A549 (cell line): ENCODE measurements at regions of chr5 and their contacts with region 1.

Region 1: DNA sequence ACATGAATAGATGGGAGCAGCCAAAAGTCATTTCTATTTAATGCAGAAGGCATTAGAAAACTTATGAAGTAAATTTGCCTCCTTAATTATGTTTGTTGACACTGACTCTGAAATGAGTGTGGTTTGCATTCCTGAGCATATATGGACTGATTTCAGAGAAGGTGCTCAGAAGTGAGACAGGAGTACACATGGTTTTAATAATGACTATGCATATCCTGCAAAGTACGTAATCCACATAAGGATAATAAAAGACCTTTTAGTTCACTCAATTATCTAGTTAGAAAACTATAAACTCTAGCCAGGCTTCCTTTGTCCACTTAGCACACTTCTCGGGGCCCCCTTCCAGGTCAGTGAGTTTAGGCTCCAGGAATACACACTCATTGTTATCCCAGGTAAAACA is 75.7 kb upstream of the SNX2 start:
- DNase-seq: no peak
- ATAC-seq: no peak
- H3K4me3 ChIP-seq: no peak overlapping the region
- H3K27ac ChIP-seq: no peak overlapping the region
- H3K4me1 ChIP-seq: no peaks in the 10 kb centered on the region
- CTCF ChIP-seq: no peak
- EP300 ChIP-seq: no peak
- POLR2A ChIP-seq: no peak
- RAD21 ChIP-seq: no peak

Region 2: GRCh38 chr5:122680631-122681350 is 18.4 kb before region 1 on chr5:
- CTCF ChIA-PET with region 1: interaction called, 13 read pairs
- POLR2A ChIA-PET with region 1: interaction called, 11 read pairs
- DNase-seq: no peak
- ATAC-seq: peak in 1 of 2 experiments; percentile 39; a peak in 1 of 6 replicates
- H3K4me3 ChIP-seq: no peak overlapping the region
- H3K27ac ChIP-seq: no peak overlapping the region
- H3K4me1 ChIP-seq: no peaks in the 10 kb centered on the region
- CTCF ChIP-seq: no peak
- EP300 ChIP-seq: no peak
- POLR2A ChIP-seq: no peak
- RAD21 ChIP-seq: no peak